ENCODE measurements at regions of chr17 and their contacts with region 1.

Region 1: DNA sequence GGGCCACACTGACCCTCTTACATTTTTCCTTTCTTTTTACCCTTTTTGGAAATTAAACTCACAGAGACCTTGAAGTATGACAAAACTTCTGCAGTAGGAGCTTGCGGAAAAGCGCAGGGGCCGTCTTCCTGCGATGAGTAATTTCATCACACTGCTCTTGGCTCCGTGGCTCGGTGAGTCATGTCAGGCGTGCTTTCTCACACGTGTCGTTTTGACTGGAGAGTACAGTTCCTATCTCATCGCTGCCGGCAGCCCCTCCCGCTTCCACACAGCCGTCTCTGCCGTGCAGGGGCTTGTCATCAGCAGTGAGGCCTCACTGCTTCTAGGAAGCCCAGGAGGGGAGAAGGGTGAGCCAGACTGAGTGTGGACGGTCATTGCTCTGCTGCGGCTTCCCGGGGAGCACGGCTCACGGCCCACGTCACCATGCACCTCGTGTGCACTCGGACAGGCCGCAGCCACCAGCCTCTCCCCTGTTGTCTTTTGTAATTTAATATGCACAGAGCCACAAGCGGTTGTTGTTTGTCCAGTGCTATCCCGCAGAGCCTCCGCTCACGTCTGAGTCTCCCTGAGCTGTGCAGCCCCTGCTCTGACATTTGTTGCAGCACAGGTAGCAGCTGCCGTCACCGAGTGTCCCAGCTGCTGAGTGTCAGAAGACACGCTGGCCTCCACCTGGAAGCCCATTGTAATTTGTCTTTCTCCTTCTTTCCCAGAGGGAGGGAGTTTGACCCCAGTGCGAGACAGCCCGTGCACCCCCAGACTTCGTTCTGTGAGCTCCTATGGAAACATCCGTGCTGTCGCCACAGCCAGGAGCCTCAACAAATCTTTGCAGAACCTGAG is 99.4 kb upstream of the CHMP6 start:
- DNase-seq: peak; percentile 90 to 99 (median 97)
- H3K4me3 ChIP-seq: peak overlapping the region in 1 of 3 experiments; percentile 43
- H3K4me3 Mint-ChIP-seq: peak overlapping the region; percentile 61 to 66
- H3K27ac ChIP-seq: peak overlapping the region; percentile 97 to 98
- H3K27ac Mint-ChIP-seq: peak overlapping the region; percentile 92 to 99 (median 98)
- H3K4me1 ChIP-seq: peaks cover 31 to 32% of the 10 kb centered on the region in 2 donors
- H3K4me1 Mint-ChIP-seq: peaks cover 41% of the 10 kb centered on the region
- H3K27me3 ChIP-seq: no peaks in the 10 kb centered on the region
- H3K27me3 Mint-ChIP-seq: peaks cover 0 to 4% (median 0%) of the 10 kb centered on the region in 3 donors
- CTCF ChIP-seq: no peak

Region 2: DNA sequence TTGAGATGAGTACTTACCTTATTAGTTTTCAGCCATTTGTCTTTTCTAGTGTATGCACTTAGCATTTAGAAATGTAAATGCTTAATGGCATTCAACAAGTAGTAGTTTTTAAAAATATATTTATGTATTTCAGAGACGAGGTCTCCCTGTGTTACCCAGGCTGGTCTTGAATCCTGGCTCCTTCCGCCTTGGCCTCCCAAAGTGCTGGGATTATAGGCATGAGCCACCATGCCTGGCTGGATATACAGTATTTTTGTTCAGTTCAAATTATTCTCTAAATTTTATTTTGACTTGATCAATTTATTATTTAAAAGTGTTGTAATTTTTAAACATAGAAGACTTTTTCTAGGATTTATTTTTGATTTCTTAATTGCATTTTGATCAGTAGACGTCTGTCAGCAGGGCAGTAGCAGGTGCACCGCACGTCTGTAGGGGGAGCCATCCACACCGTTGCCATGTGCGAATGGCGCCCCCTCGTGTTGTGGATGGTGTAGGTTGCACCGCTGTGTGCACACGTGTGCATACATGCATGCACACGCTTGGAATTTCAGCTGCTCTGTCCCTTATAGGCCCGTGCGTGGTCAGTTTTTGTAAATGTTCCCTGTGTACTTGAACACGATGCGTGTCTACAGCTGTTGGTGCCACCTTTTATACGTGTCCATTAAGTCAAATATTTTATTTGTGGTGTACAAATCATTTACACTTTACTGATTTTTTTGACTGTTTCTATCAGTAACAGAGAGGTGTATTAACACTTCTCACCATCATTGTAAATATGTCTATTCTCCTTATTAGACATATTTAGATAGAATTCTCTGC is 317.0 kb before region 1 on chr17:
- intact Hi-C with region 1: loop called in 1 of 2 experiments (anchors 10 kb)
- DNase-seq: peak; percentile 82 to 86 (median 83)
- H3K4me3 ChIP-seq: no peak overlapping the region
- H3K4me3 Mint-ChIP-seq: no peak overlapping the region
- H3K27ac ChIP-seq: no peak overlapping the region
- H3K27ac Mint-ChIP-seq: no peak overlapping the region
- H3K4me1 ChIP-seq: no peaks in the 10 kb centered on the region
- H3K4me1 Mint-ChIP-seq: no peaks in the 10 kb centered on the region
- H3K27me3 ChIP-seq: no peaks in the 10 kb centered on the region
- H3K27me3 Mint-ChIP-seq: no peaks in the 10 kb centered on the region
- CTCF ChIP-seq: peak; percentile 100

Region 3: DNA sequence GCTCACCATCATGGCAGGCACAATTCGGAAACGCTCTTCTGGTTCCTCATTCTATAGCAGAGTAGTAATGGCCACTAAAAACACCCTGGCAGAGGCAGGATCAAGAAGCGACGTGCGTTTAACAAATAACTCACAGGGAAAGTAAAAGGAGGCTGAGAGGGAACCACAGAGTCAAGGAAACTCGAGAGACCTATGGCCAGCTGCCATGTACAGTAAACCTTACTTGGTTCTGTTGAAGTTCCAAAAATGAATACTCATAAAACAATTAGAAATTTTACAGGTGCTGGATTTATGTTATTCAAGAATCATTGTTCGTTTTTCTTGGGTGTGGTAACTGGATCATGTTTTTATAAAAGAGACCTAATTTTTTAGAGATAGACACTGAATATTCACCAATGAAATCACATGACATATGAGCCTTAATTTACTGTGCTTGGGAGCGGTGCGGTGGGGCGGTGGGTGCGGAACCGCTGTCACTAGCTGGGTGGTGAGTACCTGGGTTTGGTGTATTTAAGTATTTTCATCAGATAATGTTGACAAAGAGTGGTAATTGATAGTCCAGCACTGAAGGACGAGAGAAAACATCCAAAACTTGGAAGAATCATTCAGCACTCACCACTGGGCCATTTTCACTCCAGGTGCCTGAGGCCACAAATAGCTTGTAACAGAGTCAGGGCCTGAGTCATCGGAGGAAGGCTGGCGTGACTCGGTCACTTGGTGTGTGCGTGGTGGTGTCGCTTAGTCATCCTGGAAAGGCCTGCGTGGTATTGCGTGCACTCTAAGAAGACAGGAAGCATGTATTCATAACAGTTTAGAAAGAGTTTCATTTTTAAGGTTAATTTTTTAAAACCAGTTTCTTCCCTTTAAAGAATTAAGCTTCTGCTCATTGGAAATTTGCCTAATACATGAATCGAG is 36.0 kb before region 1 on chr17:
- intact Hi-C with region 1: loop called (anchors 5 kb)
- DNase-seq: peak; percentile 94 to 99 (median 94)
- H3K4me3 ChIP-seq: no peak overlapping the region
- H3K4me3 Mint-ChIP-seq: peak overlapping the region in 1 of 2 donors; percentile 4
- H3K27ac ChIP-seq: peak overlapping the region; percentile 76 to 93
- H3K27ac Mint-ChIP-seq: peak overlapping the region; percentile 51 to 97 (median 94)
- H3K4me1 ChIP-seq: peaks cover 22 to 28% of the 10 kb centered on the region in 2 donors
- H3K4me1 Mint-ChIP-seq: peaks cover 27% of the 10 kb centered on the region
- H3K27me3 ChIP-seq: no peaks in the 10 kb centered on the region
- H3K27me3 Mint-ChIP-seq: peaks cover 0 to 2% (median 1%) of the 10 kb centered on the region in 3 donors
- CTCF ChIP-seq: no peak

Region 4: DNA sequence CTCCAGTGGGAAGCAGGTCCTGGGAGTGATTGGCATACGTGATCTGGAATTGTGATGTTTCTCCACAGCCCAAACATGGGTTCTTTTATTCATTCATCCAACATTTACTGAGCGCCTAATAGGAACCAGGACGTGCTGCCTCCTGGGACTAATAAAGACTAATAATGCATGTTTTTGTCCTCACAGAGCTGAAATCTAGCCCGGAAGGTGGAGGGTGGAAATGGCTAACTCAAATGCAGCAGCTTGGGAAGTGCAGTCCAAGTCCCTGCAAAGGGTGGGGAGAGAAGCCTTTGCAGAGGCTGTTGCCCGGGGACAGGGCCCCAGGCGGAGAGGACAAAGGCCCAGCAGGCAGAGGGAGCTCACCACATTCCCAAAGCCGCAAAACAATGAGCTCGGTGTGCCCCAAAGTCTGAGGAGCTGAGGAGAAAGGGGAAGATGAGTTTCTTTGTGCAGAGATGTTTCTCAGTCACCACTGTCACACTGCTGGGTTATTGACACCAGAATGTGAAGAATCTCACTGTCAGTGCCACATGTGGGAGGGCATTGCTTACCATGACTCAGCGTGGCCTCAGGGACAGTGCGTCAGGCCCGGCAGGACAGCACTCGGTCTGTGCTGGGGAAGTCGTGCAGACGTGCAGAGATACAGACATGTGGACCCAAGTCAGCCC is 18.8 kb before region 1 on chr17:
- intact Hi-C with region 1: loop called in 1 of 2 experiments (anchors 2 kb)
- DNase-seq: peak; percentile 68 to 85 (median 72)
- H3K4me3 ChIP-seq: no peak overlapping the region
- H3K4me3 Mint-ChIP-seq: peak overlapping the region; percentile 11 to 35
- H3K27ac ChIP-seq: peak overlapping the region in 1 of 2 donors; percentile 58
- H3K27ac Mint-ChIP-seq: peak overlapping the region; percentile 3 to 73 (median 54)
- H3K4me1 ChIP-seq: peaks cover 45 to 46% of the 10 kb centered on the region in 2 donors
- H3K4me1 Mint-ChIP-seq: peaks cover 60% of the 10 kb centered on the region
- H3K27me3 ChIP-seq: no peaks in the 10 kb centered on the region
- H3K27me3 Mint-ChIP-seq: peaks cover 2 to 18% (median 4%) of the 10 kb centered on the region in 3 donors
- CTCF ChIP-seq: no peak

Region 5: DNA sequence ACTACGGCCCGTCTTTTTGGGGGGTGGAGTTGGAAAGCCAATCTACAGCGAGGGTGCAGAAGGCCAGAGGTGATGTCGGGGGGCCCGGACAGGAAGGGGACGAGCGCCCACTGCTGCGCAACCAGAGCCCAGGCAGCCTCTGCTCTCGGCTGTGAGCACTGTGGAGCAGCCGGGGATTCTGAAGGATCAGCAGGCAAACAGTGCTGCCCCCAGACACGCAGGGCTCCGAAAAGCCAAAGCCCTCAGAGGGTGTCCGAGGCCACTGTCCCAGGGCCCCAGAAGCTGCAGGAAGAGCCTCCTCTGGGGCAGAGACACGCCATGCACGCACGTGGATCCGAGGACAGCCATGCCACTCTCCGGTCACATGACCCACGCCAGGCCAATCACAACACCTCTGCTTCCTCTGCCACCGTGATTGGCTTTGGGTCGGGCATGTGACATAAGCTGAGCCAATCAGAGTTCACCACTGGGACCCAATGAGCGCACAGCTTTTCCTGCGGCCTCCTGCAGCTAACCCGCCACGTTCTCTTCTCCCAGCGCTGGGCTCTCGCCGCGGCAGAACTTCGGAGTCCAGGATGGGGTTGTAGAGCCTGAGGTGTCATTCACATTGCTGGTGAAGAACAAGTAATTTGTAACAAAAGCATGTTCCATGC is 579.7 kb after region 1 on chr17:
- intact Hi-C with region 1: no loop called
- DNase-seq: peak; percentile 19 to 42 (median 24)
- H3K4me3 ChIP-seq: no peak overlapping the region
- H3K4me3 Mint-ChIP-seq: no peak overlapping the region
- H3K27ac ChIP-seq: no peak overlapping the region
- H3K27ac Mint-ChIP-seq: no peak overlapping the region
- H3K4me1 ChIP-seq: peaks cover 4 to 5% of the 10 kb centered on the region in 2 donors
- H3K4me1 Mint-ChIP-seq: peaks cover 3% of the 10 kb centered on the region
- H3K27me3 ChIP-seq: no peaks in the 10 kb centered on the region
- H3K27me3 Mint-ChIP-seq: peaks cover 5 to 9% (median 5%) of the 10 kb centered on the region in 3 donors
- CTCF ChIP-seq: no peak